PC-9 (cell line): ENCODE measurements at regions of chr19 and their contacts with region 1.

Region 1: GRCh38 chr19:19342756-19343322 is 22.2 kb downstream of the MAU2 start:
- DNase-seq: peak; percentile 51 to 64
- H3K4me3 ChIP-seq: no peak overlapping the region
- H3K27ac ChIP-seq: no peak overlapping the region
- H3K4me1 ChIP-seq: no peaks in the 10 kb centered on the region
- H3K27me3 ChIP-seq: no peaks in the 10 kb centered on the region
- CTCF ChIP-seq: peak; percentile 93

Region 2: DNA sequence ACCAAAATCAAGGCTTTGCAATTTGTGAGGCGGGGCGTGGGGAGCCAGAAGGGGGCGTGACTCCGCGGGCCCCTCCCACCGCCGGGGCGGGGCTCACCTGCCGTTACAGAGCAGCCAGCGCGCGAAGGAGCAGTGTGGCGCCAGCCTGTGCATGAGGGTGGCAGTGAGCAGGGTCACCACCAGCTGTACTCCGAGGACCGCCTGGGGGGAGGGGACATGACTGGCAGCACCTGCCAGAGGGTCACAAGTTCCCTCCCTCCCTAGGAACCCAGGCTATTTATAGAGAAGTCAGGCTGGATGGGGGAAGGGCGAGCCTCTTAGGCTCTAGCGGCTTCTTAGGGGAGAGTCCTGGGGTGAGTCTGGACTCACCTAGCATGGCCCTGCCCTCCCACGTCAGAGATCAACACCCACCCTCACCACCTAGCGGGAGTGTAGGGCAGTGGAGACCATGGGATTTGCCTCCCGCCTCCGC is 208.1 kb before region 1 on chr19:
- CTCF ChIA-PET with region 1: no interaction called
- POLR2A ChIA-PET with region 1: no interaction called
- intact Hi-C with region 1: no loop called
- DNase-seq: no peak
- H3K4me3 ChIP-seq: no peak overlapping the region
- H3K27ac ChIP-seq: no peak overlapping the region
- H3K4me1 ChIP-seq: peaks cover 9% of the 10 kb centered on the region
- H3K27me3 ChIP-seq: no peaks in the 10 kb centered on the region
- CTCF ChIP-seq: no peak

Region 3: DNA sequence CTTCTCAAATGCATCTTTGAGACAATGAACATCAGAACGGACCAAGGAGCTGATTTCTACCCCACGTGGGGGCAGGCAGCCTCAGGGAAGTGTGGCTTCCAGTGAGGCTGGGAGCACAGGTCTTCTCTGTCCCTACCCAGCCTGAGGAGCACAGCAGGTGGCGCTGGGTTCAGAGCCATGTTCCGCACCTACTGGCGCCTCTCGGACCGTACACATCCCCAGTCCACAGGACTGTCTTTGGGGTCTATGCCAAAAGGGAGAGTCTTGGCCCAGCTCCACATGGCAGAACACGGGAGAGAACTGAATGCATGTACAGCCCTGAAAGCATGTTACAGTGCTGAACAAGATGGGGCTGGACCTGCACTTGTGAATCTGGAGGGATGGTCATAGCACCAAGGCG is 45.1 kb before region 1 on chr19:
- CTCF ChIA-PET with region 1: interaction called, 10 read pairs
- POLR2A ChIA-PET with region 1: no interaction called
- intact Hi-C with region 1: no loop called
- DNase-seq: no peak
- H3K4me3 ChIP-seq: no peak overlapping the region
- H3K27ac ChIP-seq: no peak overlapping the region
- H3K4me1 ChIP-seq: no peaks in the 10 kb centered on the region
- H3K27me3 ChIP-seq: no peaks in the 10 kb centered on the region
- CTCF ChIP-seq: no peak